Adrenal gland (tissue), 19 donors: ENCODE measurements at regions of chr6 and their contacts with region 1.

Region 1: GRCh38 chr6:90296346-90297114 is at the start of gene BACH2:
- DNase-seq: peak; percentile 79 to 92 (median 90)
- H3K4me3 ChIP-seq: peak within 1 kb of the TSS; percentile 40 to 89 (median 68)
- H3K27ac ChIP-seq: peak within 1 kb of the TSS in 3 of 5 donors; percentile 41 to 68 (median 62)
- H3K4me1 ChIP-seq: peaks cover 12 to 17% of the 10 kb centered on the region in 2 donors
- H3K27me3 ChIP-seq: peaks cover 5% of the 10 kb centered on the region
- CTCF ChIP-seq: peak in 1 of 6 experiments; percentile 8
- POLR2A ChIP-seq: peak in 1 of 2 donors; percentile 55
- total RNA-seq, gene BACH2: 0.17 to 2.9 (median 1.3) TPM

Region 2: DNA sequence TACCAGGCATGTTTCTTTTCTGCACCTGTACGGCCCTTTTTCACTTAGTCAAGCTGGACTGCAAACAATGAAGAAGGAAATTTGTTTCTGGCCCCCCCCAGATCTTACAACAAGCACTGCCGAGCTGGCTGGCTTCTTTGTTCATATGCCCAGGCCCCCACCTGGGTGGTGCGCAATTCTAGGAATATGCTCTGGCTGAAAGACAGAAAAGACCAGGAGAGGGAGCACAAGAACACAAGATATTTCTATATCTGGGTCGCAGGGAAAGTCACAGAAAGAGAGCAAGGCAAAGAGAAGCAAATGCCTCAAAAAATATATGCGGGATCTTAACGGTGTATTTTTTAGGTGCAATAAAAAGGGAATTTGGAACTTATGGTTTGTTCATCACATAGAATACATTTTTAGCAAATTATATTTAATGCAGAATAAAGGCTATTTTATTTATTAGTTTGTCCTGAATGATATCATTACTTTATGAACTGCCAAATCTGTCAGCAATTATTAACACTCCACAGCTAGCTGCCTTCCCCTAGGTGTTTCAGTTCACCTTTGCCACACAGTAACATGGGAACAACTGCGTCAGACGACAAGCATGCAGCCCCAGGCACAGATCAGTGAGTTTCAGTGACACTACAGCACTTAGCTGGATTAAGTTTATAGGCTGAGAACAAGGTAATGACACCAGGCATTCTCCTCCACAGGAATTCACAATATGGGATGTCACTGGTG is 325.8 kb before region 1 on chr6:
- intact Hi-C with region 1: loop called in 1 of 2 experiments (anchors 5 kb)
- DNase-seq: peak; percentile 35 to 73 (median 47)
- H3K4me3 ChIP-seq: no peak overlapping the region
- H3K27ac ChIP-seq: no peak overlapping the region
- H3K4me1 ChIP-seq: no peaks in the 10 kb centered on the region
- H3K27me3 ChIP-seq: no peaks in the 10 kb centered on the region
- CTCF ChIP-seq: peak; percentile 28 to 80 (median 67)
- POLR2A ChIP-seq: no peak

Region 3: GRCh38 chr6:90080876-90081481 is 215.6 kb before region 1 on chr6:
- intact Hi-C with region 1: loop called in 1 of 2 experiments (anchors 10 kb)
- DNase-seq: no peak
- H3K4me3 ChIP-seq: no peak overlapping the region
- H3K27ac ChIP-seq: no peak overlapping the region
- H3K4me1 ChIP-seq: no peaks in the 10 kb centered on the region
- H3K27me3 ChIP-seq: no peaks in the 10 kb centered on the region
- CTCF ChIP-seq: no peak
- POLR2A ChIP-seq: no peak

Region 4: GRCh38 chr6:90383196-90383822 is 86.8 kb after region 1 on chr6:
- intact Hi-C with region 1: loop called in 1 of 2 experiments (anchors 10 kb)
- DNase-seq: no peak
- H3K4me3 ChIP-seq: no peak overlapping the region
- H3K27ac ChIP-seq: no peak overlapping the region
- H3K4me1 ChIP-seq: no peaks in the 10 kb centered on the region
- H3K27me3 ChIP-seq: peaks cover 5% of the 10 kb centered on the region
- CTCF ChIP-seq: no peak
- POLR2A ChIP-seq: no peak

Region 5: GRCh38 chr6:90478789-90479602 is 182.5 kb after region 1 on chr6:
- intact Hi-C with region 1: loop called (anchors 5 to 10 kb)
- DNase-seq: peak; percentile 89 to 97 (median 95)
- H3K4me3 ChIP-seq: no peak overlapping the region
- H3K27ac ChIP-seq: no peak overlapping the region
- H3K4me1 ChIP-seq: peaks cover 0 to 4% of the 10 kb centered on the region in 2 donors
- H3K27me3 ChIP-seq: no peaks in the 10 kb centered on the region
- CTCF ChIP-seq: peak; percentile 83 to 95 (median 94)
- POLR2A ChIP-seq: no peak